Activated CD4-positive, alpha-beta T cell treated with anti-CD3 and anti-CD28 coated beads for 36 hours (primary cell): ENCODE measurements at regions of chr6 and their contacts with region 1.

Region 1: DNA sequence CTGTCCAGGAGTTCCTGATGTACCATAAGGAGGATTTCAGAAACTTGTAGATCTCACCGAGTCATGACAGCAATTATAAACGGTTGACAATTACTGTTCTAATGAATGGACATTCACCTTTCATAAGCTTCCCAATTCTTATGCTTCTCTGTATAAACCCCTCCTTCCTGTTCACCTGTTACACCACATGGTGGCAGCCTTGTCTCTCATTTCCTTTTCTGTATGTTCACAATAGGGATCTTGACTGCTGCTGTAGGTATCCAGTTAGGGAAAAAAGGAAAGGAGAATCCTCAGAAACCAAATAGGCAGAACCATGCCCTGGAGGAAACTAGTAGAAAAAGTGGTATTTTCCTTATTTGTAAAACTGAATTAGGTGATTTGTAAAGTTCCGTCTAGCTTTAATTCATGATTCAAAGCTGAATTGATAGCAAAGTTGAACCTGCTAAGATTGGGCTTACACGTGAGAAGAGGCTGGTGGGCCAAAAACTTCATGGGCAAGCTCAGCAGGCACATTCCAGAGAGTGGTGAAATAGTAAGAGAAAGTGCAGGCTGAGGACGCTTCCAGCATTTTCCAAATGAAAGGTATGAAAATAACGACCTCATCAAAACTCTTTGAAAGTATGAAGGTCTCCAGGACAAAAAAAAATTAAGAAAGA is 29.0 kb upstream of the TBPL1 start:
- DNase-seq: peak; percentile 68
- ATAC-seq: peak; percentile 83
- H3K4me3 Mint-ChIP-seq: no peak overlapping the region
- H3K27ac Mint-ChIP-seq: no peak overlapping the region
- H3K4me1 Mint-ChIP-seq: no peaks in the 10 kb centered on the region
- H3K27me3 Mint-ChIP-seq: peaks cover 17% of the 10 kb centered on the region

Region 2: DNA sequence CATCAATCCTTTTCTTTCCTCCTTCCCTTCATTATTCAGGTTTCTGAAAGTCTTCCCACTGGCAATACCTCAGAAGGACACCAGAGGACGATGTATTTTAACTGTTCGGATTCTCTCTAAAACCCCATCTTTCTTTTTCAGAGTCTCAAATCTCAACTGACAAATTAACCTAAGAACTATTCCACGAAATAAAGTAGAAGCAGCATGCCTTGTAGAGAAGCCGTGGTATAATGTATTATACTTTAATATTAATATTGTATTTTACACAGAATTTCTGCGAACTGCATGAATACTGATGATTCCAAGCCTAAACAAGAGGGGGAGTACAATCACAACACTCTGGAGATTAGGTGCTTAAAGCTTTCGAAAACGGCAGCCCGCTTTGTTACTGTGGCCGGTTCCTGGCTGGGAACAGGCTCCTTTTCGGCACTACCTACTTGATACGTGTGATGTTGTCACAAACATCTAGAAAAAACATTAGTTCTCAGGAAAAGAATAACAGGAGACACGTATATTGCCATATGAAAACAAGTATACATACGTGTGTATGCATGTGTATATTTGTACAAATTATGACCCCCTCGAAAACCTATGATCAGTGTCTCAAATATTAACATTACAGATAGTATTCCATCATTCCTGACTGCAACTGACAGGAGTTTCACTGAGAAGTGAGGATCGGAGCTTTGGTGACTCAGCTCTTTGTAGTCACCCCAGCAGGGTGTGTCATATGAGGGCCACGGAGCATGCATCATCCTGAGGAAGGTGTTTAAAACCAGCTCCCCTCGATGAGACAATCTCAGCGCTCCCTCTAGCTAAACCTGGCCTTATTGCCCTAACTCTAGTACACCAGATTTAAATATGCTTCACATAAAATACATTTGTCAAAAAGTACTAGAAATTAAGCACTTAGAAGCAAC is 354.8 kb before region 1 on chr6:
- CTCF ChIA-PET with region 1: interaction called, 51 read pairs
- POLR2A ChIA-PET with region 1: no interaction called
- intact Hi-C with region 1: loop called in 1 of 2 experiments (anchors 1 kb)
- DNase-seq: peak; percentile 61
- ATAC-seq: peak; percentile 99
- H3K4me3 Mint-ChIP-seq: peak overlapping the region; percentile 40
- H3K27ac Mint-ChIP-seq: no peak overlapping the region
- H3K4me1 Mint-ChIP-seq: peaks cover 7% of the 10 kb centered on the region
- H3K27me3 Mint-ChIP-seq: peaks cover 28% of the 10 kb centered on the region

Region 3: GRCh38 chr6:133939778-133940667 is 16.0 kb after region 1 on chr6:
- CTCF ChIA-PET with region 1: interaction called, 19 read pairs
- POLR2A ChIA-PET with region 1: no interaction called
- intact Hi-C with region 1: no loop called
- DNase-seq: no peak
- ATAC-seq: no peak
- H3K4me3 Mint-ChIP-seq: no peak overlapping the region
- H3K27ac Mint-ChIP-seq: no peak overlapping the region
- H3K4me1 Mint-ChIP-seq: no peaks in the 10 kb centered on the region
- H3K27me3 Mint-ChIP-seq: peaks cover 12% of the 10 kb centered on the region

Region 4: GRCh38 chr6:133952815-133953633 is 29.0 kb after region 1 on chr6 and contains the start of gene TBPL1:
- CTCF ChIA-PET with region 1: interaction called, 15 read pairs
- POLR2A ChIA-PET with region 1: no interaction called
- intact Hi-C with region 1: no loop called
- DNase-seq: peak; percentile 92
- ATAC-seq: peak; percentile 90
- H3K4me3 Mint-ChIP-seq: peak within 1 kb of the TSS; percentile 98
- H3K27ac Mint-ChIP-seq: peak within 1 kb of the TSS; percentile 93
- H3K4me1 Mint-ChIP-seq: peaks cover 38% of the 10 kb centered on the region
- H3K27me3 Mint-ChIP-seq: no peaks in the 10 kb centered on the region
- total RNA-seq, gene TBPL1: 32.2 to 33.9 TPM

Region 5: DNA sequence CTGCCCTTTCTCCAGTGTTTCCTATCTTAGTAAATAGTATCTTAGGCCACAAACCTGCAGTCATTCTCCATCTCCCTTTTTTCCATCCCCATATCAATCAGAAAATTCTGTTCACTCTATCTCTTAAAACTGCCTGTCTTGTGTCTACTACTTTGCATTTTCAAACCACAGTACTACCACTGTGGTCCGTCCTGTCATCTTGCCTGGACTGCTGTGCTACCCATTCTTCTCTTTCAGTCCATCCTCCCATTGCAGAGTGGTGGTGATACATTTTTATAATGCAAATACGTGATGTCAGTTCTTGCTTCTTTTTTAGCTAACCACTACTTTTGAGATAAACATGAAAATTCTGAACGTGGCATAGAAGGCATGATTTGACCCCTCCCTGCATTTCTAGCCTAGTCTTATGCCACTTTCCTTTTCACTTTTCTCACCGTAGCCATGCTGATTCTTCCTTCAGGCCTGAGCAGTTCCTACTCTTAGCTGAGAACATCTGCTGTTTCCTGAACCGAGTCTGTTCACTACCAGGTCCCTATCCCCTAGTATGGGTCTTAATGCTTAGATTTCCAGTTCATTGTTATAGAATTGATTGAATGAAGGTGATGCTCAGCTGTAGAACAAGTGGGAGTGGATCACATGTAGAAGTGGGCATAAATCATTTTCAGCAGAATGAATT is 42.7 kb after region 1 on chr6:
- CTCF ChIA-PET with region 1: interaction called, 15 read pairs
- POLR2A ChIA-PET with region 1: no interaction called
- intact Hi-C with region 1: loop called in 1 of 2 experiments (anchors 5 kb)
- DNase-seq: no peak
- ATAC-seq: no peak
- H3K4me3 Mint-ChIP-seq: no peak overlapping the region
- H3K27ac Mint-ChIP-seq: no peak overlapping the region
- H3K4me1 Mint-ChIP-seq: peaks cover 59% of the 10 kb centered on the region
- H3K27me3 Mint-ChIP-seq: no peaks in the 10 kb centered on the region

Region 6: GRCh38 chr6:134063966-134064445 is 139.9 kb after region 1 on chr6:
- CTCF ChIA-PET with region 1: interaction called, 112 read pairs
- POLR2A ChIA-PET with region 1: no interaction called
- intact Hi-C with region 1: loop called (anchors 1 kb)
- DNase-seq: peak; percentile 70
- ATAC-seq: peak; percentile 92
- H3K4me3 Mint-ChIP-seq: no peak overlapping the region
- H3K27ac Mint-ChIP-seq: no peak overlapping the region
- H3K4me1 Mint-ChIP-seq: no peaks in the 10 kb centered on the region
- H3K27me3 Mint-ChIP-seq: peaks cover 1% of the 10 kb centered on the region

Region 7: DNA sequence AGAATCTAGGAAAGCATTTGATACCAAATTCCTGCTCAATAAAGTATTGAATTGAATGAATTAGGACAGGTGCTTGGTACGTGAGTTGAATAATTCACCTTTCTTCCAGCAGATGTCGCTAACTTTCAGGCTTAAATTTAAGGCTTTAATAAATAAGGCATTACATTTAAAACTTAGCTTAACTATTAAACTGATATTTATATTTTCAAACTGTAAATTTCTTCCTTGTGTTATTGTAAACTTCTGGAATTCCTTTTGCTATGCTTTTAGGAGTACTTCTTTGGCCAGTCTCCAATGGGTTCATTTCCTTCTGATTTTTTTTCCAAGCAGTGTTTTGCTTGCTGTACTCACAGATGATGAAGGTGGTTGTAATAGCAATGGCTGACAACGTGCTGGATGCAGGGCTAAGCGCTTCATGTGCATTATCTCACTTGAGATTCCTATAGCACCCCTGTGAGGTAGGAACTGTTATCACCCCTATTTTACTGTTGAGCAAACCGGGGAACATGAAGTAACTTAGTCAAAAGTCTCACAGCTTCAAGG is 199.7 kb after region 1 on chr6:
- CTCF ChIA-PET with region 1: interaction called, 12 read pairs
- POLR2A ChIA-PET with region 1: no interaction called
- intact Hi-C with region 1: no loop called
- DNase-seq: peak; percentile 34
- ATAC-seq: peak; percentile 97
- H3K4me3 Mint-ChIP-seq: no peak overlapping the region
- H3K27ac Mint-ChIP-seq: peak overlapping the region; percentile 51
- H3K4me1 Mint-ChIP-seq: peaks cover 2% of the 10 kb centered on the region
- H3K27me3 Mint-ChIP-seq: no peaks in the 10 kb centered on the region